Panc1 (cell line): ENCODE measurements at regions of chr11 and their contacts with region 1.

Region 1: DNA sequence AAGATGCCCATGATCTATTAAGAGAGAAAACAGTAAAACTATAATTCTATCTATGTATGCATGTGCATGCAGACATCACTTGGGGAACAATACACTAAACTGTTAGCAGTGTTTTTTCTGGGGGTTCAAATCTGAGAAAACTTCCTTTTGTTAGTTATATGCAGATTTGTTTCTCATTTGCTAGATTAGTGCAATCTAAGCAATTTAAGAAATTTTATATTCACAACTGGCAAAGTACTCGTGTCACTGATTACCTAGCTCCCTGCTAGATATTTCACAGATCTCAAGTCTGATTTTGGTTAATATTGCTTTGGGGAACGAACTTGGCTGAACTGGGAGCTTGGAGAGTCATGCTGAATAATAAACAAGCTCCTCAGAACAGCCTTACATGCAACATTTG is 14.9 kb upstream of the OSBP start:
- DNase-seq: no peak
- ATAC-seq: no peak
- H3K4me3 ChIP-seq: no peak overlapping the region
- H3K27ac ChIP-seq: no peak overlapping the region
- H3K4me1 ChIP-seq: no peaks in the 10 kb centered on the region
- H3K27me3 ChIP-seq: no peaks in the 10 kb centered on the region
- CTCF ChIP-seq: no peak

Region 2: DNA sequence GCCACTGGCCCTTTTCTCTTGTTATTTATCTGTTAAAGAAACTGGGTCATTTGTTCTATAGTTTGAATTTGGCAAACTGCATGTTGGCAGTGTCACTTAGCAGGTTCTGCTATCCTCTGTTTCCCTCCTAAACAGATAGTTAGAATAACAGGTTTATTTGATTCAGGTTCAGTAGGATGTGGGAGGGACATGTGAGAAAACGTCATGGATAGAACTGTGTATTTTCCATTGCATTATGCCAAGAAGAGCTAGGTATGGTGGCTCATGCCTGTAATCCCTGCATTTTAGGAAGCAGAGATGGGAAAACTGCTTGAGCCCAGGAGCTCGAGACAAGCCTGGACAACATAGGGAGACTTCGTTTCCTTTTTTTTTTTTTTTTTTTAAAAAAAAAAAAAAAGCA is 14.0 kb after region 1 on chr11:
- CTCF ChIA-PET with region 1: interaction called, 13 read pairs
- POLR2A ChIA-PET with region 1: interaction called, 4 read pairs
- in situ Hi-C with region 1: no loop called
- intact Hi-C with region 1: no loop called
- DNase-seq: no peak
- ATAC-seq: no peak
- H3K4me3 ChIP-seq: no peak overlapping the region
- H3K27ac ChIP-seq: no peak overlapping the region
- H3K4me1 ChIP-seq: no peaks in the 10 kb centered on the region
- H3K27me3 ChIP-seq: no peaks in the 10 kb centered on the region
- CTCF ChIP-seq: no peak